GM12878 (cell line): ENCODE measurements at regions of chr7 and their contacts with region 1.

Region 1: GRCh38 chr7:92447345-92448204 is at the start of gene GATAD1:
- DNase-seq: no peak
- ATAC-seq: peak; percentile 91
- H3K4me3 ChIP-seq: peak within 1 kb of the TSS; percentile 92
- H3K27ac ChIP-seq: peak within 1 kb of the TSS; percentile 95
- H3K4me1 ChIP-seq: no peaks in the 10 kb centered on the region
- H3K27me3 ChIP-seq: no peaks in the 10 kb centered on the region
- CTCF ChIP-seq: peak; percentile 88 to 99 (median 91)
- EP300 ChIP-seq: no peak
- POLR2A ChIP-seq: peak; percentile 72
- RAD21 ChIP-seq: no peak
- polyA plus RNA-seq, gene GATAD1: 5.5 to 6.6 TPM

Region 2: GRCh38 chr7:91826377-91826776 is 621.2 kb before region 1 on chr7:
- CTCF ChIA-PET with region 1: interaction called, 29 read pairs
- POLR2A ChIA-PET with region 1: no interaction called
- RAD21 ChIA-PET with region 1: interaction called, 18 read pairs
- SMC1A ChIA-PET with region 1: interaction called, 12 read pairs
- in situ Hi-C with region 1: loop called (anchors 5 kb)
- intact Hi-C with region 1: loop called (anchors 1 kb)
- DNase-seq: no peak
- ATAC-seq: no peak
- H3K4me3 ChIP-seq: no peak overlapping the region
- H3K27ac ChIP-seq: no peak overlapping the region
- H3K4me1 ChIP-seq: no peaks in the 10 kb centered on the region
- H3K27me3 ChIP-seq: no peaks in the 10 kb centered on the region; a peak in 1 of 4 replicates
- CTCF ChIP-seq: no peak
- EP300 ChIP-seq: no peak
- POLR2A ChIP-seq: no peak
- RAD21 ChIP-seq: no peak

Region 3: GRCh38 chr7:91880413-91881241 is 566.9 kb before region 1 on chr7 and contains the start of gene MTERF1:
- CTCF ChIA-PET with region 1: interaction called, 21 read pairs
- POLR2A ChIA-PET with region 1: no interaction called
- RAD21 ChIA-PET with region 1: interaction called, 14 read pairs
- SMC1A ChIA-PET with region 1: interaction called, 4 read pairs
- in situ Hi-C with region 1: no loop called
- intact Hi-C with region 1: loop called (anchors 10 kb)
- DNase-seq: peak; percentile 69
- ATAC-seq: peak; percentile 99
- H3K4me3 ChIP-seq: peak within 1 kb of the TSS; percentile 89
- H3K27ac ChIP-seq: peak within 1 kb of the TSS; percentile 88
- H3K4me1 ChIP-seq: peaks cover 9% of the 10 kb centered on the region
- H3K27me3 ChIP-seq: no peaks in the 10 kb centered on the region
- CTCF ChIP-seq: peak; percentile 97 to 100 (median 99); a peak in 5 of 6 replicates
- EP300 ChIP-seq: no peak
- POLR2A ChIP-seq: peak; percentile 95
- RAD21 ChIP-seq: peak; percentile 80
- polyA plus RNA-seq, gene MTERF1: 30.7 to 38.7 TPM

Region 4: GRCh38 chr7:92134271-92135051 is 313.1 kb before region 1 on chr7 and contains the start of gene CYP51A1:
- CTCF ChIA-PET with region 1: interaction called, 9 read pairs
- POLR2A ChIA-PET with region 1: interaction called, 6 read pairs
- RAD21 ChIA-PET with region 1: no interaction called
- SMC1A ChIA-PET with region 1: interaction called, 8 read pairs
- in situ Hi-C with region 1: no loop called
- intact Hi-C with region 1: loop called (anchors 2 kb)
- DNase-seq: peak; percentile 76
- ATAC-seq: peak; percentile 90
- H3K4me3 ChIP-seq: peak within 1 kb of the TSS; percentile 79
- H3K27ac ChIP-seq: peak within 1 kb of the TSS; percentile 99
- H3K4me1 ChIP-seq: peaks cover 3% of the 10 kb centered on the region; the same call in 1 of the 2 replicates
- H3K27me3 ChIP-seq: no peaks in the 10 kb centered on the region
- CTCF ChIP-seq: no peak; a peak in 1 of 6 replicates
- EP300 ChIP-seq: 0 out of 4 replicates have a peak, but pooled peaks of 1 of the 2 experiments have one; percentile 37
- POLR2A ChIP-seq: peak; percentile 87
- RAD21 ChIP-seq: no peak
- polyA plus RNA-seq, gene CYP51A1: 28.1 to 33.1 TPM

Region 5: GRCh38 chr7:92245487-92246362 is 201.8 kb before region 1 on chr7 and contains the starts of genes ANKIB1 and KRIT1:
- CTCF ChIA-PET with region 1: interaction called, 17 read pairs
- POLR2A ChIA-PET with region 1: interaction called, 5 read pairs
- RAD21 ChIA-PET with region 1: interaction called, 21 read pairs
- SMC1A ChIA-PET with region 1: interaction called, 3 read pairs
- in situ Hi-C with region 1: no loop called
- intact Hi-C with region 1: loop called (anchors 5 kb)
- DNase-seq: peak; percentile 51
- ATAC-seq: peak; percentile 84
- H3K4me3 ChIP-seq: peak within 1 kb of the TSS; percentile 93
- H3K27ac ChIP-seq: peak within 1 kb of the TSS; percentile 90
- H3K4me1 ChIP-seq: no peaks in the 10 kb centered on the region
- H3K27me3 ChIP-seq: no peaks in the 10 kb centered on the region
- CTCF ChIP-seq: peak; percentile 2 to 16 (median 13); a peak in 3 of 6 replicates
- EP300 ChIP-seq: no peak
- POLR2A ChIP-seq: peak; percentile 90
- RAD21 ChIP-seq: no peak
- polyA plus RNA-seq, gene ANKIB1: 9.7 to 14.6 TPM
- polyA plus RNA-seq, gene KRIT1: 12.0 to 12.8 TPM

Region 6: DNA sequence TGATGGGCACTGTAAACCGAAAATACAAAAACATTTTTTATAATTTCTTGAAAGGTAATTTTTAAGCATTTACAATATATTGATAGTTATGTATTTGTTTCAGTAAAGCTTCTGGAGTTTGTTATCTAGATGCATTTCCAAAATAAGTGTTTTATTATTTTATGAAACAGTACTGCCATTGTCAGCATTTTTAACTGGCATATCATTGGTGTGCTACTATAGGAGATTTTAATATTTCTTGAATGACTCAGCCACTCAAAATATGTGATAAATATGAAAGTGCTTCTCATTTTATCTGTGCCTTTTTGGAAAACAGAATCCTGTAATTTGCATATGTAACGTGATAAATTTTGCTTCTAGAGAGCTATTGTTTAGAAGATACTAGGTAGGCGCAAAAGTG is 103.9 kb before region 1 on chr7:
- CTCF ChIA-PET with region 1: no interaction called
- POLR2A ChIA-PET with region 1: no interaction called
- RAD21 ChIA-PET with region 1: no interaction called
- SMC1A ChIA-PET with region 1: no interaction called
- in situ Hi-C with region 1: no loop called
- intact Hi-C with region 1: no loop called
- DNase-seq: no peak
- ATAC-seq: no peak
- H3K4me3 ChIP-seq: no peak overlapping the region
- H3K27ac ChIP-seq: no peak overlapping the region
- H3K4me1 ChIP-seq: no peaks in the 10 kb centered on the region
- H3K27me3 ChIP-seq: no peaks in the 10 kb centered on the region
- CTCF ChIP-seq: no peak
- EP300 ChIP-seq: no peak
- POLR2A ChIP-seq: no peak
- RAD21 ChIP-seq: no peak

Region 7: DNA sequence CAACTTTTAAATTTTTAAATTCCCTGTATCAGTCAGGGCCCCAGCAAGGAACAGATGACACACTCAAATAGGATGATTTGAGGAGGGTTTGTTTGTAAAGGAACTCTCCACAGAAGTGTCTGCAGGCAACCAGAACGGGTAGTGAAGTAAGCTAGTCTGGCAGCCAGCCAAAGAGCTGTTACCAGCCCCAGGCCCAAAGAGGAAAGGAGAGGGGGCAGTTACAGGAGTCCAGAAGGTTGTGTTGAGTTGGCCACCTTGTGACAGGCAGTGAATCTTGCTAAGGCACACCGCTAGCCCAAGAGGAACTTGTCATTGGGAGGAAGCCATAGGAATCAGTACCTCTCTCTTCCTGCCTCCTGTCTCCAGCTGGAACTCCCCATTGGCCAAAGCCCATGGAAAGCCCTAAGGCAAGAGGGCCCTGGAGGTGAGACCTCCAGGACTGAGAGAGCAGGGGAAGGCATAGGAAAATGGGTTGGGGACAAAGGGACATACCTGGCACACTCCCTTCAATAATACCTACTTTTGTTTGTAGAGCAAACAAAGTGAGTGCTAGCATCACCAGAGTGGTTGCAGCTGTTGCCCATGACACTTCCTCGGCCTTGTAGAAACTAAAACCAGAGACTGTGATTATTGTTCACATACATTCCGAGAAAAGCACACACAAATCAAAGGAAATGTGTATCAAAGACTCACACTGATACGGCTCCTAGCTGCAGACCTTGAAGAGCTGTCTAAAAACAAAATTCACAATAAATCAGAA is 25.7 kb before region 1 on chr7:
- CTCF ChIA-PET with region 1: interaction called, 86 read pairs
- POLR2A ChIA-PET with region 1: no interaction called
- RAD21 ChIA-PET with region 1: interaction called, 45 read pairs
- SMC1A ChIA-PET with region 1: interaction called, 22 read pairs
- in situ Hi-C with region 1: no loop called
- intact Hi-C with region 1: loop called (anchors 1 kb)
- DNase-seq: no peak
- ATAC-seq: no peak
- H3K4me3 ChIP-seq: no peak overlapping the region
- H3K27ac ChIP-seq: no peak overlapping the region
- H3K4me1 ChIP-seq: peaks cover 5% of the 10 kb centered on the region; the same call in 1 of the 2 replicates
- H3K27me3 ChIP-seq: no peaks in the 10 kb centered on the region
- CTCF ChIP-seq: no peak
- EP300 ChIP-seq: no peak
- POLR2A ChIP-seq: no peak
- RAD21 ChIP-seq: no peak